ENCODE measurements at regions of chr13 and their contacts with region 1.

Region 1: GRCh38 chr13:24693862-24694471 is 13.8 kb downstream of the ATP12A start:
- DNase-seq: peak; percentile 56
- H3K4me3 Mint-ChIP-seq: no peak overlapping the region
- H3K27ac Mint-ChIP-seq: no peak overlapping the region
- H3K4me1 Mint-ChIP-seq: peaks cover 6% of the 10 kb centered on the region
- H3K27me3 Mint-ChIP-seq: peaks cover 51% of the 10 kb centered on the region

Region 2: GRCh38 chr13:24613128-24613527 is 80.8 kb before region 1 on chr13:
- CTCF ChIA-PET with region 1: interaction called, 10 read pairs
- POLR2A ChIA-PET with region 1: no interaction called
- intact Hi-C with region 1: no loop called
- DNase-seq: no peak
- H3K4me3 Mint-ChIP-seq: no peak overlapping the region
- H3K27ac Mint-ChIP-seq: no peak overlapping the region
- H3K4me1 Mint-ChIP-seq: peaks cover 20% of the 10 kb centered on the region
- H3K27me3 Mint-ChIP-seq: no peaks in the 10 kb centered on the region

Region 3: GRCh38 chr13:24759197-24759596 is 65.2 kb after region 1 on chr13:
- CTCF ChIA-PET with region 1: no interaction called
- POLR2A ChIA-PET with region 1: no interaction called
- intact Hi-C with region 1: no loop called
- DNase-seq: no peak
- H3K4me3 Mint-ChIP-seq: no peak overlapping the region
- H3K27ac Mint-ChIP-seq: no peak overlapping the region
- H3K4me1 Mint-ChIP-seq: no peaks in the 10 kb centered on the region
- H3K27me3 Mint-ChIP-seq: peaks cover 7% of the 10 kb centered on the region

Region 4: DNA sequence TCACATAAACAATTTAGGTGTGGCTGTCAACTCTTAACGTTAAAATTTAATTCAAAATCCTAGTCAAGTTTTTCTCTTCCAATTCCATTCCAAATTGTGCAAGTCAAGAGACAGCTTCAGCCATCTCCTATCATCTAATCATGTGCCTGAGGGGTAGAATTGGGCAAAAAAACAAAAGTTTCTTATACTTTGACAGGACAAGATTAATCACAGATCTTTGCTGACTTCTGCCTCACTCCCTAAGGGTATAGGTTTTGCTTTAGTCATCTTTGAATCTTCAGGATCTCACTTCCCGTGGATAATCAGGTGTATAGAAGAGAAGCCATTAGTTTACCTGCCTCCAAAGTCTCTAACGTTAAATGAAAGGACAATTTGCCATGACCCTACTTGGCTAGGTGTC is 94.6 kb after region 1 on chr13:
- CTCF ChIA-PET with region 1: no interaction called
- POLR2A ChIA-PET with region 1: no interaction called
- intact Hi-C with region 1: no loop called
- DNase-seq: no peak
- H3K4me3 Mint-ChIP-seq: no peak overlapping the region
- H3K27ac Mint-ChIP-seq: no peak overlapping the region
- H3K4me1 Mint-ChIP-seq: peaks cover 6% of the 10 kb centered on the region
- H3K27me3 Mint-ChIP-seq: peaks cover 34% of the 10 kb centered on the region